ENCODE measurements at regions of chr17 and their contacts with region 1.

Region 1: DNA sequence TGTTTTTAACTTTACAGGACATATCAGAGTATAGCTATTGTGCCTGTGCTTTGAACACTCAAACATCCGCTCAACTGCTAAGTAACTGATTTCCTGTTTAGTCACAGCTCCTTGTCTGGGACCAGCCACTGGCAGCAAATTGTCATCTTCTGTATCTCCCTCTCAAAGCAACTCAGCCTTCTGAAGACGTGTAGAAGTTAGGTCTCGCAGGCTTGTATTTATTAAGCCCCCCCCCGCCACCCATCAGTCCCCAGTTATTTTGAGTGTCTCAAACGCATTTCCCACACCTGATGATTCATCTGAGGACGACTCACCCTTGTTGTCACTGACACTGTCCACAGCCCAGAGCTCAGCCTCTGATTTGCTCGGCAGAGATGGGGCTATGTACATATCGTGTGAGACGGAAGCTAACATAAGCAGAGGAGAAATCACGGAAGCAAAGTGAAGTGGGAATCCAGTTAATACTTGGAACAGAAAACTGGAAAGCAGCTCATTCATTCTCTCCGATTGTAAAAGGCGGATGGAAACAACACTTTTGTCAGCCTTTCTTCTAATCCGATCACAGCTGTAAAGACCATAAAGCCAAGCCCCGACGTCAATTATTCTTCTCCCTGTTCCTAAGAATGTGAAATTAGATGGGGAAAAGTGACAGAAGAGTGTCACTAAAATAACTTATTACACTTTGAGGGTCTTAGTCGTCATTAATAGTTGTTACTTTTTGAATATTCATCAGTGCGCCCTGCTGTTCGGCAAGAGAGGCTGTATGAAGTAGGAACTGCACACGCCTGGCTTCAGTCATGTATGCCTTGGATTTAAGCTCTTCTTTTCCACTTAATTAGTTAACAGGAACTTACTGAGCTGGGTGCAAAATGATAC is 64.2 kb downstream of the PITPNC1 start:
- DNase-seq: peak; percentile 90
- H3K4me3 ChIP-seq: peak overlapping the region; percentile 39
- H3K27ac ChIP-seq: peak overlapping the region; percentile 90
- H3K4me1 ChIP-seq: peaks cover 55% of the 10 kb centered on the region
- H3K27me3 ChIP-seq: no peaks in the 10 kb centered on the region
- CTCF ChIP-seq: no peak

Region 2: DNA sequence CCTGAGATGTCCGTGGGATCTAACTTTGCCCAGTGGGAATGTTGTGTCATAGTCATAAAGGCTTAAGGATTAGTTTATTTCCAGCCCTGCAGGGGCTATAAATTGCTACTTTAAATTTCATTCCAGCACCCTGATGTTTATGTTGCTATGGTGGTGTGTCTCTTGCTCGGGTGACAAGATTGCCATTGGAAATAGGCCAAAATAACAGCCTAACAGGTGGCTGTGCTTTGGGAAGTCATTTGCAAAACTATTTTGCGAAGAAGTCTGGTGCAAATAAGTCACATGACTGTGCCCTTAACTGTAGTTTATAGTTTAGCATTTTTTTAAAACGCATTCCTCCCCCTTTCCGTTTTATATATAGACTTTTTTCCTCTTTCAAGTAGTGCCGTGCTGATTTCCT is 41.1 kb before region 1 on chr17:
- CTCF ChIA-PET with region 1: no interaction called
- POLR2A ChIA-PET with region 1: no interaction called
- intact Hi-C with region 1: loop called (anchors 5 kb)
- DNase-seq: peak; percentile 82
- H3K4me3 ChIP-seq: no peak overlapping the region
- H3K27ac ChIP-seq: peak overlapping the region; percentile 65
- H3K4me1 ChIP-seq: peaks cover 17% of the 10 kb centered on the region
- H3K27me3 ChIP-seq: no peaks in the 10 kb centered on the region
- CTCF ChIP-seq: no peak

Region 3: GRCh38 chr17:67503184-67503583 is 61.9 kb after region 1 on chr17:
- CTCF ChIA-PET with region 1: no interaction called
- POLR2A ChIA-PET with region 1: no interaction called
- intact Hi-C with region 1: no loop called
- DNase-seq: no peak
- H3K4me3 ChIP-seq: no peak overlapping the region
- H3K27ac ChIP-seq: no peak overlapping the region
- H3K4me1 ChIP-seq: no peaks in the 10 kb centered on the region
- H3K27me3 ChIP-seq: no peaks in the 10 kb centered on the region
- CTCF ChIP-seq: no peak

Region 4: DNA sequence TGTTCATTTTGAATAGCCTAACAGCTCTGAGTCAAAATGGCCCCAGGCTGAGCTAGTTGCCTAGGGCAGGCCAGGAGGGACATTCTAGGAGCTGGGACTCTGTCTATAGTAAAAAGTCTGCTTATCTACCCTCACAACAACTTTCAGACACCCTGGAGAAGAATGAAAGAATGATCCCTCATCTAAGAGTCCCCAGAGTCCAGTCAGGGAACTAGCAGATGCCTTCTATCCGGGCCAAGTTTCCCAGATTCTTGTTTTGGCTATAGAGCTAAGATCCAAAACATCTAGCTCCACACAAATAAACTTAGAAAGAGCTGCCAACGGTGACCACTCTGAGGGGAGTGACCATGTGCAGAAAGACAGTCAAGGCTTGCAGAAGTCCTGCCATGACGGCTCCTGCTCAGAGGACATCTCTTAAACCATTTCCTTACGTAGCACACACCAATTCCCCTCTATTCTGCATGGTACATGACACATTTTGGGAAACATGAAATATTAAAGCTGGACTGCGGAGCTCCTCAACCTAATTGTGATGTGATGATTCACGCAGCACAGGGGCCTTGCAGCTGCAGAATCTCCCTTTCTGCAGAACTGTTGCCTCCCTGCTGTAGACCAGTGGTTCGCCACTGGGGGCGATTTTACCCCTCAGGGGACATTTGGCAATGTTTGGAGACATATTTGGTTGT is 1135.7 kb after region 1 on chr17:
- CTCF ChIA-PET with region 1: no interaction called
- POLR2A ChIA-PET with region 1: no interaction called
- intact Hi-C with region 1: no loop called
- DNase-seq: no peak
- H3K4me3 ChIP-seq: no peak overlapping the region
- H3K27ac ChIP-seq: no peak overlapping the region
- H3K4me1 ChIP-seq: no peaks in the 10 kb centered on the region
- H3K27me3 ChIP-seq: no peaks in the 10 kb centered on the region
- CTCF ChIP-seq: no peak